Endothelial cell of umbilical vein (primary cell): ENCODE measurements at regions of chr11 and their contacts with region 1.

Region 1: DNA sequence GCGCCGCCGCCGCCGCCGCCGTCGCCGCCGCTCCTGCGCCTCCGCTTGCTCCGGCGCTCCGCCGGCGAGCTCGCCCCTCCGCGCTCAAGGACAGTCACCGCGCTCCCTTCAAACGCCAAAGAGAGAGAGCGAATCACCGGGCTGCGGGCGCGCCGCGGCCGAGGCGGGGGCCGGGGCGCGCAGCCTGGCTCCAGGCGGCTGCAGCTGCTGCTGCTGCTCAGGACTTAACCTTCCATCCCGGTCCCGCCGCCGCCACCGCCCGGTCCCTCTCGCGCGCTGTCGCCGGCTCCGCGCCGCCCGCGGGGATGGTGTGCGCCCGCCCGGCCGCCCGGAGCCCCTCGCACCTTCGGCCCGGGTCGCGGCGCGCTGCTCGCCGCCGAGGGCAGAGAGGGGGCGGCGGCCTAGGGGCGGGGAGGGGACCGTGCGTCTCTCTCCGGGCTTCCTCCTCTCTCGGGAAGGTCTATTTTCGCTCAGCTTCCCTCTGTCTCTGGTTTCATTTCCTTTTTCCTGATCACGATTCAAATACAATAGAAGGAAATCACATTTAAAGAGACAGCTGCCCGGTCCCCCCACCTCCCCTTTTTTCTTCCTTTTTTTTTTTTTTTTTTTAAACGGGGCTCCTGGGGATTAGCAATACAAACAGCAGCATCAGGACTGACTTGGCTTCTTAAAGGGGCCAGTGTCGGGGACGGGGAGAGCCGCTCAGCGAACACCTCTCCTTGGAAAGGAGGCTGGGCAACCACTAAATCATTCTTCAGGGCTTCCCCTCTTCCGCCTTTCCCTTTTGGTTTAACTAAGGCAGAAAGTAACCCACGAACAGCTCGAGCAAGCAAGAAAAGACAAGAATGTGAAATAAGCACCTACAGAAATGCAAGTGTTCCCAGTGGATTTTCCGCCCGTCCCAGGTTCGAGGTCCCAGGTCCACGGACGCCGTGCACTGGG is 22.1 kb downstream of the LMO2 start:
- DNase-seq: peak; percentile 92
- H3K4me3 ChIP-seq: peak overlapping the region; percentile 56 to 87 (median 76)
- H3K27ac ChIP-seq: peak overlapping the region; percentile 62
- H3K4me1 ChIP-seq: peaks cover 23% of the 10 kb centered on the region
- H3K27me3 ChIP-seq: peaks cover 0 to 2% of the 10 kb centered on the region in 2 experiments
- CTCF ChIP-seq: no peak
- POLR2A ChIP-seq: no peak

Region 2: GRCh38 chr11:33402066-33402465 is 467.7 kb before region 1 on chr11:
- CTCF ChIA-PET with region 1: no interaction called
- POLR2A ChIA-PET with region 1: no interaction called
- dilution Hi-C with region 1: no loop called
- intact Hi-C with region 1: no loop called
- DNase-seq: no peak
- H3K4me3 ChIP-seq: no peak overlapping the region
- H3K27ac ChIP-seq: no peak overlapping the region
- H3K4me1 ChIP-seq: no peaks in the 10 kb centered on the region
- H3K27me3 ChIP-seq: no peaks in the 10 kb centered on the region
- CTCF ChIP-seq: no peak
- POLR2A ChIP-seq: no peak

Region 3: GRCh38 chr11:33700425-33701271 is 169.1 kb before region 1 on chr11 and contains the start of gene C11orf91:
- CTCF ChIA-PET with region 1: no interaction called
- POLR2A ChIA-PET with region 1: no interaction called
- dilution Hi-C with region 1: no loop called
- intact Hi-C with region 1: loop called (anchors 1 kb)
- DNase-seq: peak; percentile 98
- H3K4me3 ChIP-seq: peak within 1 kb of the TSS in 2 of 3 experiments; percentile 8 to 38
- H3K27ac ChIP-seq: peak within 1 kb of the TSS; percentile 89
- H3K4me1 ChIP-seq: peaks cover 52% of the 10 kb centered on the region
- H3K27me3 ChIP-seq: no peaks in the 10 kb centered on the region
- CTCF ChIP-seq: no peak
- POLR2A ChIP-seq: peak; percentile 88
- total RNA-seq, gene C11orf91: 1.4 and 2.1 TPM in 2 replicates

Region 4: DNA sequence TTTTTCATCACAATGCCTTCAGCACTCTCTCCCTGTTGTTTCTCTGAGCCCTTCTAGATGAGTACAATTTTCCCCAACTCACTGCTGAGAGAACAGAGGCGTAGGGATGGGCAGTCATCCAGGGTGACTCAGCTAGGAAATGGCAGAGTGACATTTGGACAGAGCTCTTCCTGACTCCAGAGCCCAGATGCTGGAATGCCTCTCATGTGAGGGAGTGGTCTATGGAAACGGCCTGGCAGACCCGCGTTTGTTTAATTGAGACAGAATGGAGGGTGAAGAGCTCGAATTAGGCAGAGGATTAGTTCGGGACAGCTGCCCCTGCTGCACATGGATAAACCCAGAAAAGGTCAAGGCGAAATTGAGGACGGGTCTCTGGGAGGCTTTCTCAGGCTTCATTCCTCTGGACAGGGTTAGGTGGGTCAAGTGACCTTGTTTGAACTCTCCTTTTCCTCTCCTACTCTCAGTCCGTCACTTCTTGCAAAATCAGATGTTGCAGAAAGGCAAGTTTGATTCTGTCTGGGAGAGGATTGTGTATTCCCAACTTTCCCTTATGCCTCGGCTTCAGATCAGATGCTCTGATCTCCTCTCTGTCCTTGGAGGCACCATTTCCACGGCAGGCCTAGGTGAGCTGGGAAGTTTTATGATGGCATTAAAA is 29.8 kb after region 1 on chr11:
- CTCF ChIA-PET with region 1: interaction called, 7 read pairs
- POLR2A ChIA-PET with region 1: no interaction called
- dilution Hi-C with region 1: no loop called
- intact Hi-C with region 1: loop called (anchors 1 kb)
- DNase-seq: peak; percentile 98
- H3K4me3 ChIP-seq: no peak overlapping the region
- H3K27ac ChIP-seq: peak overlapping the region; percentile 19
- H3K4me1 ChIP-seq: peaks cover 18% of the 10 kb centered on the region
- H3K27me3 ChIP-seq: peaks cover 2 to 3% of the 10 kb centered on the region in 2 experiments
- CTCF ChIP-seq: no peak
- POLR2A ChIP-seq: no peak

Region 5: DNA sequence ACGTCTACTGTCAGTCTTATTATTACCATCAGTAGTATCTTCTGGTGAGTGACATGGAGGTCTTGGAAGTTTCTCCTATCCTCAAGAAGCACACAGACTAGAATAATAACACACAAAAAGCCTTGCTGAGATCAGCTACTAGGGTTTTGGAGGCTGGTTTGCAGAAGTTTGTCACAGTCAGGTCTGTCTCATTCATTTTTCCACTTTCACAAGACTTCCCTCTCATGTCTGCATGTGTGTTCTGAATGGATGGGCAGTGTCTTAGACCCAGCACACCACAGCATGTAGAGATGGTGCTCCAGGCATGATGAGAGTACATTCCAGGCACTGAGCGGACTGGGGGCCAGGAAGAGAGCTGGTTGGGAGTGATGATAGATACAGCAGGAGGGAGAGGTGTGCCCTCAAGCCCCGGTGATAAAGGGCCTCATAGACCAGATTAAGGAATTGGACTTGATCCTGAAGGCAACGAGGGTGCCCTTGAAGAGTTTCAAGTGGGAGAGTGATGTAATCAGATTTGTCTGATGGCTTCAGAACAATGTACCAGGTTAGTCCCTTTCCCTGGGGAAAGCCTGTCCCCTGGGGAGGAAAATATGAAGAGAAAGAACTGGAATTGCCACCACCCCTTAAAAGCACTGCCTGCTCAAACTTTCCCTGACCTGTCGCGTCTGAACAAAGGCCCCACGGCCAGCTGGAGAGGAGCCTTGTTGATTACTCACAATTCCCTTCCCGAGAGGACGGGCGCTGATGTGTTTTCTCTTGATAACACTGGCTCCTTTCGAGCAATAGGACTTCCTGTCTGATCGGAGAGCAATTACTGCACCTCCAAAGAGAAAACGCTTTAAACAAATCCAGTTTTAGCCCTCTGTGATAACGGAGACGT is 67.2 kb after region 1 on chr11:
- CTCF ChIA-PET with region 1: interaction called, 6 read pairs
- POLR2A ChIA-PET with region 1: interaction called, 3 read pairs
- dilution Hi-C with region 1: no loop called
- intact Hi-C with region 1: loop called (anchors 1 kb)
- DNase-seq: peak; percentile 99
- H3K4me3 ChIP-seq: no peak overlapping the region
- H3K27ac ChIP-seq: peak overlapping the region; percentile 97
- H3K4me1 ChIP-seq: peaks cover 63% of the 10 kb centered on the region
- H3K27me3 ChIP-seq: no peaks in the 10 kb centered on the region
- CTCF ChIP-seq: no peak
- POLR2A ChIP-seq: peak; percentile 59

Region 6: GRCh38 chr11:33987975-33988580 is 118.3 kb after region 1 on chr11:
- CTCF ChIA-PET with region 1: interaction called, 10 read pairs
- POLR2A ChIA-PET with region 1: no interaction called
- dilution Hi-C with region 1: no loop called
- intact Hi-C with region 1: no loop called
- DNase-seq: peak; percentile 80
- H3K4me3 ChIP-seq: no peak overlapping the region
- H3K27ac ChIP-seq: no peak overlapping the region
- H3K4me1 ChIP-seq: no peaks in the 10 kb centered on the region
- H3K27me3 ChIP-seq: peaks cover 2 to 3% of the 10 kb centered on the region in 2 experiments
- CTCF ChIP-seq: peak; percentile 90 to 91
- POLR2A ChIP-seq: no peak

Region 7: GRCh38 chr11:34791780-34792542 is 922.2 kb after region 1 on chr11:
- CTCF ChIA-PET with region 1: no interaction called
- POLR2A ChIA-PET with region 1: no interaction called
- dilution Hi-C with region 1: no loop called
- intact Hi-C with region 1: no loop called
- DNase-seq: peak; percentile 27
- H3K4me3 ChIP-seq: no peak overlapping the region
- H3K27ac ChIP-seq: no peak overlapping the region
- H3K4me1 ChIP-seq: peaks cover 13% of the 10 kb centered on the region
- H3K27me3 ChIP-seq: no peaks in the 10 kb centered on the region
- CTCF ChIP-seq: peak in 1 of 2 donors; percentile 11
- POLR2A ChIP-seq: no peak